Heart right ventricle (tissue), 16 donors: ENCODE measurements at regions of chr16 and their contacts with region 1.

Region 1: DNA sequence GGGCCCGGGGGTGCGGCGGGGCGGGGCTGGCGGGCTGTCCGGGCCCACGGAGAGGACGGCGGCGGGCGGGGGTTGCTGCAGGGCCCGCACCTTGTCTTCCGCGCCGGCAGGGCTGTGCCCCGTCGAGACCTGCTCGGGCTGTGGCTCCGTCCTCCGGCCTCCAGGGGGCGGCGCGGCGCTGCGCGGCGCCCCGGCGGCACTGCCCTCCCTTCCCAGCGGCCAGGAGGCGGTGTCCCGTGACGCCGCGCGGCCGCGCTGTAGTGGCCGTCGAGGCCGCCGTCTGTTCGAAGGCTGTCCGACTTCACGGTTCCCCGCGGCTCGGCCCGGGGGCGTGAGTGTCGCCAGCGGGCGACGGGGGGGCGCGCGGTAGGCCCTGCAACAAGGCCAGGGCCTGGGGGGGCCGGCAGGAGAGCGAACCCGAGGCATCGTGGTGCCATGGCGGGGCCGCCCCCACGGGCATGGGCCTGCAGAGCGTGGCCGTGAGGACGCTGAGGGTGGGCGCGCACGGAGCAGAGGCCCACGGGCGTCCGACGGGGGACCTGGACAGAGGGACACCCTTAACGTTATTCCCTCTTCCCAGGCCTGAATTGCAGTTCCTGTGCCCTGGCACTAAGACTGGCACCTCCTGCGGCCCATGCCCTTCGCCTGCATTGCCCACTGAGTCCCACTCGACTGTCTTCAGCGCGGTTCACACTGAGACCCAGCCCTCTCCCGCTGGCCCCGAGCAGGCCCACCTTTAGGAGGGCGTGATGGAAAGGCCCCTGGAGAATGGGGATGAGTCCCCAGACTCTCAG is at the start of gene PLEKHG4:
- DNase-seq: peak; percentile 53 to 78
- ATAC-seq: peak; percentile 70 to 91 (median 82)
- H3K4me3 ChIP-seq: peak within 1 kb of the TSS; percentile 28 to 62 (median 54)
- H3K27ac ChIP-seq: peak within 1 kb of the TSS in 7 of 10 donors; percentile 16 to 72 (median 37)
- H3K4me1 ChIP-seq: peaks cover 0 to 29% (median 8%) of the 10 kb centered on the region in 9 donors
- H3K27me3 ChIP-seq: no peaks in the 10 kb centered on the region
- CTCF ChIP-seq: peak; percentile 47 to 77 (median 65)
- total RNA-seq, gene PLEKHG4: 0.25 to 2.5 (median 0.61) TPM

Region 2: DNA sequence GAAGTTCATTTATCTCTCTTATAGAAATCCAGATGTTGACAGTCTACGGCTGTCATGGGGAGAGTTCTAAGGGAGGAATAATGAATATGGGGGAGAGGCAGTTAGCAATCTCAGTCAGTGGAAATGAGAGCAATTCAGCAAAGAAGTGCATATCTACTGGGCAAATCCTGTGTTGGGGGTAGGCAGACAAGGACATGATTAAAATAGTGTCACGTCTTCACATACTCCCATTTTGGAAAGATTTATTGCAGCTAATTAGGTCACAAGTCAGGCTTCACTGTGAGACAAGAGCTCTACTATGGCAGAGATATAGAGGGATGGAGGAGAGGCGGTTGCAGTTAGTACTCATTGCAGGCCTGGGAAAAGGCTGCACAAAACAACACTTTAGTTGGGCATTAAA is 76.9 kb after region 1 on chr16:
- intact Hi-C with region 1: loop called in 1 of 10 experiments (anchors 10 kb)
- DNase-seq: no peak
- ATAC-seq: no peak
- H3K4me3 ChIP-seq: no peak overlapping the region
- H3K27ac ChIP-seq: no peak overlapping the region
- H3K4me1 ChIP-seq: no peaks in the 10 kb centered on the region
- H3K27me3 ChIP-seq: no peaks in the 10 kb centered on the region
- CTCF ChIP-seq: no peak

Region 3: GRCh38 chr16:67393035-67393787 is 113.7 kb after region 1 on chr16 and contains the start of gene TPPP3:
- intact Hi-C with region 1: loop called in 3 of 10 experiments (anchors 5 to 10 kb)
- DNase-seq: peak; percentile 95
- ATAC-seq: peak; percentile 80 to 89 (median 82)
- H3K4me3 ChIP-seq: peak within 1 kb of the TSS; percentile 21 to 62 (median 48)
- H3K27ac ChIP-seq: peak within 1 kb of the TSS; percentile 5 to 88 (median 72)
- H3K4me1 ChIP-seq: peaks cover 27 to 80% (median 47%) of the 10 kb centered on the region in 9 donors
- H3K27me3 ChIP-seq: peaks cover 0 to 45% (median 9%) of the 10 kb centered on the region in 7 donors
- CTCF ChIP-seq: peak; percentile 53 to 88 (median 74)
- total RNA-seq, gene TPPP3: 6.4 to 15.9 (median 9.0) TPM

Region 4: DNA sequence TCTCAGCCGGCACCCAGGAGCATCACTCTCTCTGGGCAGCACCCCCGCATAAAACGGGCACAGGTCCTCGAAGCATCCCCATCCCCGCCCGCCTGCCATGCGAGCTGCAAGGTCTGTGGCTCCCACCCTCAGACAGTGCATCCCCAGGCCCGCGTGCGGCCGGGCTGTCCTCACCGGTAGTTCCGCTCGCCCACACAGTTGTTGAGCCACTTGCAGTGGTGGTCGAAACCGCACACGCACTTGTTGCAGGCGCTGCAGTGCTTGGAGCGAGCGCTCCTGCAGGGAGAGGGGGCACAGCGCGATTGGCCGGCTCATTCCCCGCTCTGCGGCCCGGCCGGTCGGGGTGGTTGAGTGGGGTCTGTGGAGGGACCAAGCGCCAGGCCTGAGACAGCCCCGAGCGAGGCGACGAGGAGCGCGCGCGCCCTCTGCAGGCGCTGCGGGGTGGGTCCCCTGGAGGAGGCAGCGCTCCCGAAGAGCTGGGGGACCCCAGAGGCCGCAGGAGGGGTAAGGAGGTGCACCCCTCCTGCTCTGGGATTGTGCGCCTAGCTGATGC is 119.8 kb after region 1 on chr16:
- intact Hi-C with region 1: loop called in 4 of 10 experiments (anchors 5 to 10 kb)
- DNase-seq: peak in 1 of 2 donors; percentile 69
- ATAC-seq: peak; percentile 27 to 50 (median 35)
- H3K4me3 ChIP-seq: peak overlapping the region in 5 of 10 donors; percentile 15 to 38 (median 24)
- H3K27ac ChIP-seq: peak overlapping the region in 5 of 10 donors; percentile 8 to 88 (median 85)
- H3K4me1 ChIP-seq: peaks cover 23 to 58% (median 44%) of the 10 kb centered on the region in 9 donors
- H3K27me3 ChIP-seq: peaks cover 0 to 39% (median 3%) of the 10 kb centered on the region in 7 donors
- CTCF ChIP-seq: peak; percentile 54 to 89 (median 83)

Region 5: DNA sequence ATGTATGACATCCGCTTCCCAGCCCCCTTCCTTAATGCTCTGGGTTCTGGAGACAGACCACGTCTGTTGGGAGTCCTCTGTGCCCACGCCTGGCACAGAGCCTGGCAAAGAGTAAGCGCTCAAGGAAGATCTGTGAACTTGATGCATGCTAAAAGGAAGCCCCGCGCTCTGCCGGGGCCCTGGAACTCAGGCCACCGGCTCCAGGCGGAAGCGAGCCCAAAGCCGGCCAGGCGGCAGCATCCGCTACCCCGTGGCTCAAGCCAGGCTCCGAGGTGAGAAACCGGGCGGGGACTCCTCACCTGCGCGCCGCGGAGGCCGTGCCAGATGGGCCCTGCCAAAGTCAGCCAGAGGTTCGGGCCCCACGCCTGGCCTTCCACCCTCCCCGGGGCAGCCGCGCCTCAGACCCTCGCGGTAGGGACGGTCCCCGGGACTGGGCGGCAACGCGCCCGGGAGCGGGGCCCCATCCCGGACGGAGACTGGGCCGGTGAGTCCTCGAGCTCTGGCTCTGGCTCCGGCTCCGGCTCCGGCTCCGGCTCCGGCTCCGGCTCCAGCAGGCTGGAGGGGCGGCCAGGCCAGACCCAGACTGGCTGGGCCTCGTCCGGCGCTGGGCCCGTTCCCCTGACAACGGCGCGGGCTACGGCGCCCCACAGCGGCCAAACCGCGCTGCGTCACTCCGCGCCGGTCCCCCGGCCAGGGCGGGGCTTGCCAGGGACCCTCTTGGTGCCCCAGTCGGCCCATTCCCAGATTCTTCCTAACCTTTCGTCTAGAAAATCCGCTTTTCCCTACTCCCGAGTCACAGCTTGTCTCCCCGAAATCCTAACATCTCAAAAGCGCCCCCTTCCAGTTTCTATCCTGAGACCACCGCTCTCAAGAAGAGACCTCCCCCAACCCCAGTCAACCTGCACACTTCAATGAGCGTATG is 136.6 kb after region 1 on chr16 and contains the start of gene ZDHHC1:
- intact Hi-C with region 1: loop called in 1 of 10 experiments (anchors 10 kb)
- DNase-seq: peak; percentile 68 to 83
- ATAC-seq: peak; percentile 95 to 97 (median 96)
- H3K4me3 ChIP-seq: peak within 1 kb of the TSS; percentile 78 to 96 (median 92)
- H3K27ac ChIP-seq: peak within 1 kb of the TSS; percentile 38 to 93 (median 87)
- H3K4me1 ChIP-seq: peaks cover 0 to 33% (median 13%) of the 10 kb centered on the region in 9 donors
- H3K27me3 ChIP-seq: peaks cover 0 to 9% (median 0%) of the 10 kb centered on the region in 7 donors
- CTCF ChIP-seq: peak; percentile 22 to 76 (median 62)
- total RNA-seq, gene ZDHHC1: 3.2 to 6.3 (median 4.2) TPM